ENCODE measurements at regions of chr3 and their contacts with region 1.

Region 1: DNA sequence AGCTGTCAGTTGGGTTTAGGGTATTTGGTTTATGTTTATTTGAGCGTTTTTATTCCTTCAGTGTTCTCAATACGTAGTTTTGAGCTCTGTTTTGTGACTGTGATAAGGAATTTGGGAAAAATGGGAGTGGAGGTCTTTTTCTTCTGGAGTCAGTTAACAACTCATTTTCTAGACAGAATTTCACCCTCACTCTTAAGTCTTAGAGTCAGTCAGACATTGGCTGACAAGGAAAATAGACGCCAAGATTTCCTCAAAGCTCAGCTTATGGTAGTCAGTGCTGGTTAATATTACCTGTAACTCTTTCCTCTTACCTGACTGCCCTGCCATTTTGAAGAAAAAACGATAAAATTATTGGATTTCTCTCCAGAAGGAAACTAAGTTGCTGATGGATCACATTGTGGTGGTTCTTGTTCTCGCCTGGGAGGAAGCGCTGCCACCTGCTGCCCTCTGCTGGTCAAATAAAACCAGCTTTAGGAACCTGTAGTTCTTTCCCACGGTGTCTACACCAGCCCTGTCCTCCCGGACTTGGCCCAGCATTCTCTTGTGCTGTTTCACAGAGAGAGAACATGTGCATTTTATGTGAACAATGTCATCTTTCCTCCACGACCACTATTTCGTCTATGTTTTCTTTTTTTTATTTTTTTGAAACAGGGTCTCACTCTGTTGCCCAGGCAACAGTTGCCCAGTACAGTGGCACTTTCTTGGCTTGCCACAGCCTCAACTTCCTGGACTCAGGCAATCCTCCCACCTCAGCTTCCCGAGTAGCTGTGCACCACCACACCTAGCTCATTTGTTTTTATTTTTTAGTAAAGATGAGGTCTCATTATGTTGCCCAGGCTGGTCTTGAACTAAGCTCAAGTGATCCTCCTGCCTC is 41.4 kb upstream of the UMPS start:
- DNase-seq: peak; percentile 52
- H3K4me3 Mint-ChIP-seq: no peak overlapping the region
- H3K27ac Mint-ChIP-seq: no peak overlapping the region
- H3K4me1 Mint-ChIP-seq: peaks cover 7% of the 10 kb centered on the region
- H3K27me3 Mint-ChIP-seq: peaks cover 17% of the 10 kb centered on the region

Region 2: GRCh38 chr3:124565013-124565412 is 123.8 kb before region 1 on chr3:
- intact Hi-C with region 1: loop called (anchors 1 kb)
- DNase-seq: peak; percentile 20
- H3K4me3 Mint-ChIP-seq: no peak overlapping the region
- H3K27ac Mint-ChIP-seq: no peak overlapping the region
- H3K4me1 Mint-ChIP-seq: no peaks in the 10 kb centered on the region
- H3K27me3 Mint-ChIP-seq: peaks cover 22% of the 10 kb centered on the region

Region 3: DNA sequence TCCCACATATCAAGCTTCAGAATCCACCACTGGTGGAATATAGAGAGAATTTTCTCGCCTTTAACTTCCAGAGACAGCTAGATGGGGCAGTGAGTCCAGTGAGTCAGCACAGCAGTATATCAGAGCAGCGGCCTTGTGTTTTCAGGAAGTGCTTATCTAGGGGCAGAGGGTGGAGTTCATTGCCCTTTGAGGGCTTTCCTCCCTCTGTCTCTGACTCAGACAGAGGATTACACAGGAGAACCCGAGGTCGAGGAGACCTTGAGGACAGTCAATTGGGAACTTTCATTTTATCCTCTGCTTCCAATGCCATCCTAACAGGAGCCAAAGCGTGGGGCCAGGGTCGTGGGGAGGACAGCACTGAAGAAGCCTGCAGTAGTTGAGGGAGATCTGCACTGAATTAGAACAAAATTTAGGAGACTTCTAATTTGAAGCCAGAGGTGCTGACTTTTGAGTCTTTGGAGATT is 68.2 kb before region 1 on chr3:
- intact Hi-C with region 1: loop called (anchors 2 kb)
- DNase-seq: no peak
- H3K4me3 Mint-ChIP-seq: no peak overlapping the region
- H3K27ac Mint-ChIP-seq: peak overlapping the region; percentile 64
- H3K4me1 Mint-ChIP-seq: peaks cover 25% of the 10 kb centered on the region
- H3K27me3 Mint-ChIP-seq: peaks cover 11% of the 10 kb centered on the region

Measured in activated T-helper 2 cell treated with anti-CD3 and anti-CD28 coated beads, Interferon-gamma antibody, Interleukin-2, Interleukin-4, amounts not matched to agents 10 μg/mL and 5 μg/mL and 100 μg/mL, durations not matched to agents 14 hours and 24 hours and 36 hours (primary cell).